HepG2 (cell line): ENCODE measurements at regions of chr16 and their contacts with region 1.

Region 1: GRCh38 chr16:74606521-74607310 is at the start of gene GLG1:
- DNase-seq: peak; percentile 85
- ATAC-seq: peak; percentile 94
- H3K4me3 ChIP-seq: peak within 1 kb of the TSS; percentile 73 to 99 (median 89)
- H3K27ac ChIP-seq: peak within 1 kb of the TSS; percentile 81
- H3K4me1 ChIP-seq: peaks cover 57% of the 10 kb centered on the region
- H3K27me3 ChIP-seq: peaks cover 0 to 3% of the 10 kb centered on the region in 2 experiments; a peak in 1 of 5 replicates
- CTCF ChIP-seq: peak; percentile 37
- EP300 ChIP-seq: no peak
- POLR2A ChIP-seq: peak; percentile 97 to 99
- RAD21 ChIP-seq: peak; percentile 68
- total RNA-seq, gene GLG1: 46.1 and 87.7 TPM in 2 replicates

Region 2: GRCh38 chr16:74501484-74502479 is 104.9 kb before region 1 on chr16:
- CTCF ChIA-PET with region 1: no interaction called
- POLR2A ChIA-PET with region 1: no interaction called
- in situ Hi-C with region 1: no loop called
- intact Hi-C with region 1: loop called (anchors 10 kb)
- DNase-seq: no peak
- ATAC-seq: no peak
- H3K4me3 ChIP-seq: no peak overlapping the region
- H3K27ac ChIP-seq: no peak overlapping the region
- H3K4me1 ChIP-seq: no peaks in the 10 kb centered on the region
- H3K27me3 ChIP-seq: no peaks in the 10 kb centered on the region
- CTCF ChIP-seq: no peak
- EP300 ChIP-seq: no peak
- POLR2A ChIP-seq: no peak
- RAD21 ChIP-seq: no peak

Region 3: GRCh38 chr16:74582970-74583369 is 23.7 kb before region 1 on chr16:
- CTCF ChIA-PET with region 1: no interaction called
- POLR2A ChIA-PET with region 1: interaction called, 26 read pairs
- in situ Hi-C with region 1: no loop called
- intact Hi-C with region 1: no loop called
- DNase-seq: no peak
- ATAC-seq: no peak
- H3K4me3 ChIP-seq: no peak overlapping the region
- H3K27ac ChIP-seq: no peak overlapping the region
- H3K4me1 ChIP-seq: peaks cover 32% of the 10 kb centered on the region
- H3K27me3 ChIP-seq: no peaks in the 10 kb centered on the region
- CTCF ChIP-seq: no peak
- EP300 ChIP-seq: no peak
- POLR2A ChIP-seq: no peak
- RAD21 ChIP-seq: no peak

Region 4: GRCh38 chr16:74633686-74634085 is 27.0 kb after region 1 on chr16:
- CTCF ChIA-PET with region 1: no interaction called
- POLR2A ChIA-PET with region 1: interaction called, 10 read pairs
- in situ Hi-C with region 1: no loop called
- intact Hi-C with region 1: no loop called
- DNase-seq: no peak
- ATAC-seq: no peak
- H3K4me3 ChIP-seq: no peak overlapping the region
- H3K27ac ChIP-seq: no peak overlapping the region
- H3K4me1 ChIP-seq: peaks cover 43% of the 10 kb centered on the region
- H3K27me3 ChIP-seq: no peaks in the 10 kb centered on the region
- CTCF ChIP-seq: no peak
- EP300 ChIP-seq: no peak
- POLR2A ChIP-seq: no peak
- RAD21 ChIP-seq: no peak

Region 5: GRCh38 chr16:74650966-74651567 is 44.4 kb after region 1 on chr16:
- CTCF ChIA-PET with region 1: no interaction called
- POLR2A ChIA-PET with region 1: no interaction called
- in situ Hi-C with region 1: no loop called
- intact Hi-C with region 1: no loop called
- DNase-seq: peak; percentile 25
- ATAC-seq: peak; percentile 42
- H3K4me3 ChIP-seq: no peak overlapping the region
- H3K27ac ChIP-seq: no peak overlapping the region
- H3K4me1 ChIP-seq: no peaks in the 10 kb centered on the region
- H3K27me3 ChIP-seq: no peaks in the 10 kb centered on the region
- CTCF ChIP-seq: peak; percentile 41
- EP300 ChIP-seq: no peak
- POLR2A ChIP-seq: no peak
- RAD21 ChIP-seq: no peak

Region 6: GRCh38 chr16:74709441-74709877 is 102.7 kb after region 1 on chr16:
- CTCF ChIA-PET with region 1: no interaction called
- POLR2A ChIA-PET with region 1: no interaction called
- in situ Hi-C with region 1: no loop called
- intact Hi-C with region 1: no loop called
- DNase-seq: peak; percentile 78
- ATAC-seq: peak; percentile 92
- H3K4me3 ChIP-seq: no peak overlapping the region
- H3K27ac ChIP-seq: no peak overlapping the region
- H3K4me1 ChIP-seq: peaks cover 8% of the 10 kb centered on the region
- H3K27me3 ChIP-seq: peaks cover 6 to 26% of the 10 kb centered on the region in 2 experiments; a peak in 3 of 5 replicates
- CTCF ChIP-seq: peak; percentile 96
- EP300 ChIP-seq: no peak
- POLR2A ChIP-seq: no peak
- RAD21 ChIP-seq: peak; percentile 90